CD4-positive, alpha-beta memory T cell (primary cell): ENCODE measurements at regions of chr4 and their contacts with region 1.

Region 1: DNA sequence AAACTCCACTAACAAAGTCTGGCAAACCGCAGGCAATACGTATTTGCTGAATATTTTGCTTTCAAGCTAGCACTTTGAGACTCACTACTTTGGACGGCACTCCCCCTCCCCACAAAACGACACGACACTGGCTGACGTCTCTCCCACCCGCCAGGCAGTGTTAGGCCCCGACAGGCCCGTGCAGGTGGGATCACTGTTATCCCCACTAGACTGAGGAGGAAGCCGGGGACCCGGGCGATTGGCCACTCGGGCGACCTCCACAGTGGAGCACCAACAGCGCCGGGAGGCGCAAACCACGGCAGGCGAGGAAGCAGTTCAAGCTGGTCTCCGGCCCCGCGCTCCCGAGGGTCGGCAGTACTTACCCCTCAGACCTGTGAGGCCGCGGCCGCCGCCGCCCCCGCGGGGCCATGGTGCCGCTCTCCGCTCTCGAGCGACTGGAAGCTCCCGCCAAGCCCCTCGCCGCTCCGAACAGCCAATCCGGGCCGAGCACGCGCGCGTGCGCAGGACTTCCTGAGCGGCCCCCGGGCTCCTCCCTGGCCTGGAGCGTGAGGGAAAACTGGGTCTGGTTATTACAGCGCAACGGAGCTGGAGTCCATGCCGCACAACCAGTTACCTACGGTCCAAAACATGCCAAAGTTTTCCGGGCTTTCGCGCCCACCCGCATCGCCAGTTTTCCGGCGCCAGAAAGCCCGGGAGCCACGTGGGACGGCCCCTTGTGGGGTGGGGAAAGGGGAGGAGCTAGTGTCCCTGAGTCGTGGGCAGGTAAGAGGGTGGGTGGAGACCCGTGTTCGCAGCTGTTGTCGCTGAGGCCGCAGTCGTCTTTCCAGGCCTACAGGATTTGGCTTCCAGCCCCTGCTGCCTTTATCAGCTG is at the start of gene CENPU:
- DNase-seq: peak; percentile 93 to 95 (median 94)
- H3K4me3 ChIP-seq: peak within 1 kb of the TSS; percentile 59 to 81
- H3K4me3 Mint-ChIP-seq: peak within 1 kb of the TSS; percentile 88 to 96 (median 92)
- H3K27ac ChIP-seq: peak within 1 kb of the TSS; percentile 56
- H3K27ac Mint-ChIP-seq: peak within 1 kb of the TSS; percentile 86 to 95 (median 92)
- H3K4me1 ChIP-seq: peaks cover 15% of the 10 kb centered on the region
- H3K4me1 Mint-ChIP-seq: peaks cover 8 to 23% (median 14%) of the 10 kb centered on the region in 4 donors
- H3K27me3 ChIP-seq: no peaks in the 10 kb centered on the region
- H3K27me3 Mint-ChIP-seq: no peaks in the 10 kb centered on the region
- total RNA-seq, gene CENPU: 2.1 to 2.2 TPM

Region 2: DNA sequence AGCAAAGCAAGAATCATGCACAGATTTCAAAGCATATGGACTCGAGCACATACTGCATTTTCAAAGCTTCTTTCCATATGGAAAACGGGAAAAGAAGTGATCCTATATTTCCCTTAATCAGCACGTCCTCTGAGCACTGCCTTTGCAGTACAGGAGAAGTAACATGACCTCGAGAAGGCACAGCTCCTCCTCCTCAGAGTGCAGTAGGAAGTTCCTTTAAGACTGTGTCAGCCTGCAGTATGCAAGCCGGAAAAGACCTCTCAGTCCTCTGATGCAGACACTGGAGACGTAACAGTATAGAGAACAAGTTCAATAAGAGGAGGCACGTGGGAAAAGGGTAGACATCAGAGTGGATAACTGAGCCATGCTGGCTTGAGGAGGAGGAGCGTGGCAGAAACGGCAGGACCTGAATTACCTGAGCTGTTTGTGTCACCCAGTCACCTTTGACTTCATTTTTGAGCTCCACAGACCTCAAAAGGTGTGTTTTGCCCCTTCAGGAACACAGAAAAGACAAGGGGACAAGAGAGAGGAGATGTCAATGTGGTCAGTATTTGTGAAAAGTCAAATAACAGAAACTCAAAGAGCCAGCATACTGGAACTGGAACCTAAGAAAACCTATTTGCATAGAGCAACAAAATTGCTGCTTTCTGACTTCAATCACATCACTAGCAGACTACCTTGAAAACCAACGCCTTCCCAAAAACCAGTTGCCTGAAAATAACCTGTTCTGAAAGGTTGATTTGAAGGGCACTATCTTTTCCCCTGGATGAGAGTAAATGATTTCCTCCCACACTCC is 280.3 kb before region 1 on chr4:
- CTCF ChIA-PET with region 1: no interaction called
- POLR2A ChIA-PET with region 1: no interaction called
- intact Hi-C with region 1: no loop called
- DNase-seq: peak; percentile 42 to 82 (median 56)
- H3K4me3 ChIP-seq: no peak overlapping the region
- H3K4me3 Mint-ChIP-seq: peak overlapping the region in 7 of 8 donors; percentile 42 to 84 (median 71)
- H3K27ac ChIP-seq: peak overlapping the region; percentile 44
- H3K27ac Mint-ChIP-seq: peak overlapping the region; percentile 79 to 96 (median 88)
- H3K4me1 ChIP-seq: peaks cover 74% of the 10 kb centered on the region
- H3K4me1 Mint-ChIP-seq: peaks cover 56 to 90% (median 72%) of the 10 kb centered on the region in 4 donors
- H3K27me3 ChIP-seq: no peaks in the 10 kb centered on the region
- H3K27me3 Mint-ChIP-seq: no peaks in the 10 kb centered on the region

Region 3: DNA sequence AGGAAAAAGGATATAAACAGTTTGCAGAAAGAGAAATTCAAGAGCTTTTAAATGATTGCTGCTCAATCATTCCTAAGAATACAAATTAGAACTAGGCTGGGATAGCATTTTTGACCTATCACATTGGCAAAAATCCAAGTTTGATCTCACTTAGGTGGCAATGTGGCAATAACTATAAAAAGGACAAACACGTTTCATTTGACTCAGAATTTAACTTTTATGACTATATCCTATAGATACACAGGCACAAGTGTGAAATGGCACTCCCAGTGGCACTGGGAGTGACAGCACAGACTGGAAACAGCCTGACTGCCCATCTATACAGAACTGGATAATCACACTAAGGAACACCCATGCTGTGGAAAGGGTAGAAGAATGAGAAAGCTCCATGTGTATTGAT is 11.1 kb before region 1 on chr4:
- CTCF ChIA-PET with region 1: interaction called, 6 read pairs
- POLR2A ChIA-PET with region 1: interaction called, 13 read pairs
- intact Hi-C with region 1: no loop called
- DNase-seq: no peak
- H3K4me3 ChIP-seq: no peak overlapping the region
- H3K4me3 Mint-ChIP-seq: no peak overlapping the region
- H3K27ac ChIP-seq: no peak overlapping the region
- H3K27ac Mint-ChIP-seq: peak overlapping the region in 2 of 7 donors; percentile 26 to 49
- H3K4me1 ChIP-seq: no peaks in the 10 kb centered on the region
- H3K4me1 Mint-ChIP-seq: peaks cover 0 to 7% (median under 1%) of the 10 kb centered on the region in 4 donors
- H3K27me3 ChIP-seq: no peaks in the 10 kb centered on the region
- H3K27me3 Mint-ChIP-seq: no peaks in the 10 kb centered on the region

Region 4: GRCh38 chr4:184762100-184762499 is 28.2 kb after region 1 on chr4:
- CTCF ChIA-PET with region 1: no interaction called
- POLR2A ChIA-PET with region 1: interaction called, 18 read pairs
- intact Hi-C with region 1: no loop called
- DNase-seq: peak; percentile 57 to 79 (median 72)
- H3K4me3 ChIP-seq: peak overlapping the region in 1 of 2 donors; percentile 44
- H3K4me3 Mint-ChIP-seq: peak overlapping the region; percentile 59 to 85 (median 77)
- H3K27ac ChIP-seq: no peak overlapping the region
- H3K27ac Mint-ChIP-seq: peak overlapping the region; percentile 71 to 95 (median 87)
- H3K4me1 ChIP-seq: peaks cover 15% of the 10 kb centered on the region
- H3K4me1 Mint-ChIP-seq: peaks cover 6 to 19% (median 15%) of the 10 kb centered on the region in 4 donors
- H3K27me3 ChIP-seq: no peaks in the 10 kb centered on the region
- H3K27me3 Mint-ChIP-seq: no peaks in the 10 kb centered on the region

Region 5: DNA sequence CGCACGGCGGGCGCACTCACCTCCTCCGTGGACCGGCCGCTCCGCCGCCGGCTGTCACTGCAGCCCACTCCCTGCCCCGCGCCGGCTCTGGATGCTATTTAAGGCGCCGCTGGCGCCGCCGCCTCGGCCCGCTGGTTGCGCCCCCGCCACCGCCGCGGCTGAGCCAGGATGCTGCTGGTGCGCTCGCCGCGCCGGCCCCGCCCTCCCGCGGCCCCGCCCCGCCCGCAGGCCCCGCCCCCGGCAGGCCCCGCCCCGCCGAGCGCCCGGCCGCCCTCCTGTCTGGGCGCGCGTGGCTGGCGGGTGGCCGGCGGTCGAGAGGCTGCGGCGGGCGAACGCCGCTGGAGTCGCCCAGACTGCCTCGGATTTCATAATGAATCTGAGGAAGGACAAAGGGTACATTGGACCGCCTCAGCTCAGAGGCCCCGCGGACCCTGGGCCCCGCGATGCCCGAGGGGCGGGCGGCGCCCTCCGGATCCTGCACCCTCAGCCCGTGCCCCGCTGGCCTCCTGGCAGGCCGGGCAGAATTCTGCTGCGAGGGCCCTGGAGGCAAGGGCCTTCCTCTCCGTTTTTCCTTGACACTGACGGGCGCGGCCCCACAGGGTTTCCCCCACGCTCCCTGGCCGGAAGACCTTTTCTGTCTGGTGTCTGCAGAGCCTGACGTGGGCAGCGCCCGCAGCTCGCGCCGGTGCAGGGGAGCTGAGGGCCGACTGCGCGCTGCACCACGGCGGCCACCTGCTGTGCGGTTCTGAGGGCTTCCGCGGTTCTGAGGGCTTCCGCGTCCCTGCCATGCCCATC is 92.2 kb after region 1 on chr4 and contains the start of gene ACSL1:
- CTCF ChIA-PET with region 1: interaction called, 3 read pairs
- POLR2A ChIA-PET with region 1: interaction called, 15 read pairs
- intact Hi-C with region 1: loop called (anchors 5 kb)
- DNase-seq: peak; percentile 73 to 80 (median 79)
- H3K4me3 ChIP-seq: peak within 1 kb of the TSS; percentile 24 to 55
- H3K4me3 Mint-ChIP-seq: peak within 1 kb of the TSS; percentile 85 to 97 (median 91)
- H3K27ac ChIP-seq: peak within 1 kb of the TSS; percentile 56
- H3K27ac Mint-ChIP-seq: peak within 1 kb of the TSS; percentile 85 to 97 (median 93)
- H3K4me1 ChIP-seq: peaks cover 24% of the 10 kb centered on the region
- H3K4me1 Mint-ChIP-seq: peaks cover 13 to 45% (median 19%) of the 10 kb centered on the region in 4 donors
- H3K27me3 ChIP-seq: no peaks in the 10 kb centered on the region
- H3K27me3 Mint-ChIP-seq: no peaks in the 10 kb centered on the region
- total RNA-seq, gene ACSL1: 11.5 to 12.9 TPM

Region 6: DNA sequence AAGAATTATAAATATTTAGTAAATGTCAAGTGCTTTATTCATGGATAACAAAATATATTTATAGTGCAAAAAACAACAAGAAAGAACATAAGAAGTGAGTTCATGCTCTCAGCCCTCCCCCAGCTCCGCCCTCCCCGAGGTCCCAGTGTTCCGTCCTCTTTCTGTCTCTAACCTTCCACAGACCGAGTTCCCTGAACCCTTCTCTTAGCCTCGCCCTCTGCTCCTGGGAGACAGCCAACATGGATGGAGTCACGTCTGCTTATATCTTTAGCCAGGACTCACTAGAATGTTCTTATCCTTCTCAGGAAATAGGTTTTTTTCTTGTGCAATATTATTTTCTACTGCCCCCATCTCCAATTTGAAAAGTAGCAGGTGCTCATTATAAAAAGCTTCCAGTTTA is 244.3 kb after region 1 on chr4:
- CTCF ChIA-PET with region 1: no interaction called
- POLR2A ChIA-PET with region 1: no interaction called
- intact Hi-C with region 1: no loop called
- DNase-seq: no peak
- H3K4me3 ChIP-seq: no peak overlapping the region
- H3K4me3 Mint-ChIP-seq: peak overlapping the region in 1 of 8 donors; percentile 29
- H3K27ac ChIP-seq: no peak overlapping the region
- H3K27ac Mint-ChIP-seq: no peak overlapping the region
- H3K4me1 ChIP-seq: peaks cover 11% of the 10 kb centered on the region
- H3K4me1 Mint-ChIP-seq: peaks cover 0 to 8% (median 0%) of the 10 kb centered on the region in 4 donors
- H3K27me3 ChIP-seq: peaks cover 5% of the 10 kb centered on the region
- H3K27me3 Mint-ChIP-seq: peaks cover 9 to 16% of the 10 kb centered on the region in 2 donors

Region 7: DNA sequence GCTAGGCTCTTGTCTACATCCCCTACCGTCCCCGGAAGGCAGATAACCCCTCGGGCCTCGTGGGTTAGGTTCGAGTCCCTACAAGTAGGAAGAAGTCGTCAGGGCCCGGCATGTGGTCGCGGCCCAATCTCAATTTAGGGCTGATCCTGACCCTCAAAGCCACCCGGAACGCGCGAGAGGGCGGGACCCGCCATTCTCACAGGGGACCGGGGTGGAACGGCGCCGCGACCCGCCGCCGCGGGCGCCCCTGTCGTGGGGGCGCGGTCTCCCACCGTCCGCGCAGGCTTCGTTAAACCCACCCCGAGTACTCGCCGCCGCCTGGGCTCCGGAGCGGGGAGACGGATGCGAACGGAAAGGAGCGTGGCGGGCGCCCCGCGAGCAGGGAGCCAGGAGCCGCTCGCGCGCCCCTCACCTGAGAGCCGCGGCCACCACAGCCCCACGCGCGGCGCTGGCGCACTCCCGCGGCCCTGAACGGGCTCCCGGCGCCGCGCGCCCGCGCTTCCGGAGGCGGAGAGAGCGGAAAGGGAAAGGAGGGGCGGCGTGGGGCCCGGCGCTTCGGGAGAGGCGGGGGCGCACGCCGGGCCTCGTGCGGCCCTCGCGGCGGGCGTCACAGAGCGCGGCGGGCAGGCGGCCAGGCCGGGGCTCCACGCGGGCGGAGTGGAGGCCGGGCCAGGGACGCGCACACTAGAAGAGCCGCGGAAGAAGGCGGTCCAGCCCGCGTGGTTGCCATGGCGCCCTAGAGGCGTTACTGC is 469.8 kb after region 1 on chr4 and contains the start of gene CFAP97:
- CTCF ChIA-PET with region 1: no interaction called
- POLR2A ChIA-PET with region 1: no interaction called
- intact Hi-C with region 1: loop called (anchors 1 kb)
- DNase-seq: peak; percentile 88 to 90 (median 90)
- H3K4me3 ChIP-seq: peak within 1 kb of the TSS; percentile 47 to 83
- H3K4me3 Mint-ChIP-seq: peak within 1 kb of the TSS; percentile 91 to 99 (median 96)
- H3K27ac ChIP-seq: peak within 1 kb of the TSS; percentile 82
- H3K27ac Mint-ChIP-seq: peak within 1 kb of the TSS; percentile 98 to 99 (median 99)
- H3K4me1 ChIP-seq: peaks cover 48% of the 10 kb centered on the region
- H3K4me1 Mint-ChIP-seq: peaks cover 31 to 66% (median 48%) of the 10 kb centered on the region in 4 donors
- H3K27me3 ChIP-seq: no peaks in the 10 kb centered on the region
- H3K27me3 Mint-ChIP-seq: no peaks in the 10 kb centered on the region
- total RNA-seq, gene CFAP97: 41.6 to 41.9 TPM